HepG2 (cell line): ENCODE measurements at regions of chr21 and their contacts with region 1.

Region 1: DNA sequence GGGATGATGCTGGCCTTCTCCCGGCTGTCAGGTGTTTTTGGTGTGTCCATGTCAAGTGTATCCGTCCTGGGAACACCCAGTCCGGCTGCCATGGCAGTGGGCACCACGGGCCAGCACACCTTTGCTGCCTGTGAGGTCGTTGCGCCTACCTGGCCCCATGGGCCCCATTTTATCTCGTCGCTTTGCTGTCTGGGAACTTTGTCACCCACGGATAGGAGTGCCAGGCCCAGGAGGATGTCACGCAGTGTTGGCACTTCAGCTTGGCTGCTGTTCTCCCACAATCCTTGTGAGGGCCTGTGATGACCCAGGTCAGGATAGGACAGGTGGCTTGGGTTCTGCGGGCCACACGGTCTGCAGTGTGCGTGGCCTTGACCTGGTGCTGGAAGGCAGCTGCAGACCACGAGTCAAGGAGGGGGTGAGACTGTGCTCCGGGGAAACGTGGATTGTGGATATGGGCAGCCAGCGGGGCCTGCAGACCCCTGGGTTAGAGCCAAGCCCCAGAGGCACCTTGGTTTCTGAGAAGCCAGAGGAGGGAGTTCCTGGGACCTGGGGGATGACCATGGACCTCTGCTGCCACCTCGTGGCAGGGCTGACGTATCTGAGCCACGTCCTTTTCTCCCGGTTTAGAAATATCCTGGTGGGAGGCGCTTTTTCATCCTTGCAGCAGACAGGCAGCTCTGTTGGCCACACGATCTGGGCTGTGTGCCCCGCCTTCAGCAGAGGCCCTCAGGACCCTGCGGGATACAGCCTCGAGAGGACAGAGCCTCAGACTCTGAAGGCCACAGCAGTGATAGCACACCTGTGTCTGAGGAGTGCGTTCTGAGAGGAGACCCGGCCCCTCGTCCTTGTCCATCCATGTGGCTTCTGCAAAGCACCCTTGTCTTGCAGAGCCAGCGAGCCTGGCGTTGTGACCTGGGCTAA is 161.1 kb upstream of the COL6A1 start:
- DNase-seq: peak; percentile 78
- ATAC-seq: peak; percentile 85
- H3K4me3 ChIP-seq: no peak overlapping the region; a peak in 1 of 6 replicates
- H3K27ac ChIP-seq: no peak overlapping the region
- H3K4me1 ChIP-seq: peaks cover 35% of the 10 kb centered on the region
- H3K27me3 ChIP-seq: peaks cover 2 to 44% of the 10 kb centered on the region in 2 experiments; a peak in 3 of 5 replicates
- CTCF ChIP-seq: peak; percentile 96
- EP300 ChIP-seq: no peak
- POLR2A ChIP-seq: no peak
- RAD21 ChIP-seq: peak; percentile 95

Region 2: DNA sequence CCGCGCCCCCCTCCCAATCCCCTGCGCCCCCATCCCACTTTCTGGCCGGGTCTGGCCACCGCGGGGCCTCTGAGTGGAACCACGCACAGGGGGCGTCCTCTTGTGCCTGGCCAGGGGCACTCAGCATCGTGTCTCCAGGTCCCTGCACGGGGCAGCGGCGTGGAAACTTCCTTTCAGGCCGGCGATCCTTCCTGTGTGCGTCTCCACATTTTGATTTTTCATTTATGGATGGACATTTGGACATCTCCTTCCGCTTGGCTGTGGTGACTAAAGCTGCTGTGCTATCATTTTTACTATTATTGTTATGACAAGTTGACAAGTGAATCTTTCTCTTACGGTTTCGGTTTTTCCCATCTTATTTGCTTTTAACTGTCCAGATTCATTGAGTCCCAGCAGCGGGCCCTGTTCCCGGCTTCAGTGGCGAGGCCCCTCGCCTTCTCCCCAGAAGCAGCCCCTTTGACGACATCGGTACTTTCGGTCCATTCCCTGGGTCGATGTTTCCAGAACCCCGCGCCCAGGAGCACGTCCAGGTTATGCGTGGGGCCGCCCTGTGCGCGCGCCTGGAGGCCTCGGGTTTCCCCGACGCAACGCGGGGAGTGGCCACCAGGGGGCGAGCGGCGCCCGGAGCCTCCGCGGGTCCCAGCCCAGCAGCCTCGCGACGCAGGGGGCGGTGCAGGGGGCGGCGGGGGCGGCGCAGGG is 265.8 kb before region 1 on chr21:
- CTCF ChIA-PET with region 1: interaction called, 27 read pairs
- POLR2A ChIA-PET with region 1: interaction called, 8 read pairs
- in situ Hi-C with region 1: loop called (anchors 5 kb)
- intact Hi-C with region 1: loop called (anchors 1 kb)
- DNase-seq: peak; percentile 38
- ATAC-seq: peak; percentile 14
- H3K4me3 ChIP-seq: peak overlapping the region; percentile 61 to 71 (median 63)
- H3K27ac ChIP-seq: peak overlapping the region; percentile 8
- H3K4me1 ChIP-seq: peaks cover 33% of the 10 kb centered on the region
- H3K27me3 ChIP-seq: peaks cover 13 to 52% of the 10 kb centered on the region in 2 experiments
- CTCF ChIP-seq: peak; percentile 87
- EP300 ChIP-seq: no peak
- POLR2A ChIP-seq: no peak
- RAD21 ChIP-seq: peak; percentile 57

Region 3: DNA sequence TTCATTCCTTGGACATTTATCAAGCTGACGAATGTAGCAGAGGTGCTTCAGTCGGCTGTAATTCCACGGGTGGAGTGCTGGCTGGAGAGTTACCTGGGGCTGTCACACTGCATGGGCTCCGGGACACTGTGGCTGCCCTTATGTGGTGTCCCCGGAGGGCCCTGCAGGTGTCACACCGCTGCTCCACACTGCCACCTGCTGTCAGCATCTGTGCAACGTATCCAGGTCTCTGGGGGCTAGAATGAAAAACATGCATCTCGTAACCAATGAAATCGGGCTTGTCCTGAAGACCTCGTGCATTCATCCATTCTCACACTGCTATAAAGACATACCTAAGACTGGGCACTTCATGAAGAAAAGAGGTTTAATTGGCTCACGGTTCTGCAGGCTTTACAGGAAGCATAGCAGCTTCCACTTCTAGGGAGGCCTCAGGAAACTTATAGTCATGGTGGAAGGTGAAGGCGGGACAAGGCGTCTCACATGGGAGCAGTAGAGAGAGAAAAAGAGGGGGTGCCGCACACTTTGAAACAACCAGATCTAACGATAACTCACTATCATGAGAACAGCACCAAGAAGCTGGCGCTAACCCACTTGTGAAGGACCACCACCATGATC is 223.6 kb before region 1 on chr21:
- CTCF ChIA-PET with region 1: interaction called, 7 read pairs
- POLR2A ChIA-PET with region 1: no interaction called
- in situ Hi-C with region 1: no loop called
- intact Hi-C with region 1: loop called (anchors 1 kb)
- DNase-seq: peak; percentile 52
- ATAC-seq: peak; percentile 96
- H3K4me3 ChIP-seq: no peak overlapping the region
- H3K27ac ChIP-seq: no peak overlapping the region
- H3K4me1 ChIP-seq: no peaks in the 10 kb centered on the region
- H3K27me3 ChIP-seq: no peaks in the 10 kb centered on the region; a peak in 3 of 5 replicates
- CTCF ChIP-seq: peak; percentile 93
- EP300 ChIP-seq: no peak
- POLR2A ChIP-seq: no peak
- RAD21 ChIP-seq: peak; percentile 81

Region 4: GRCh38 chr21:45615145-45615711 is 205.2 kb before region 1 on chr21:
- CTCF ChIA-PET with region 1: no interaction called
- POLR2A ChIA-PET with region 1: no interaction called
- in situ Hi-C with region 1: no loop called
- intact Hi-C with region 1: loop called (anchors 1 kb)
- DNase-seq: peak; percentile 23
- ATAC-seq: peak; percentile 70
- H3K4me3 ChIP-seq: no peak overlapping the region; a peak in 1 of 6 replicates
- H3K27ac ChIP-seq: no peak overlapping the region
- H3K4me1 ChIP-seq: peaks cover 12% of the 10 kb centered on the region
- H3K27me3 ChIP-seq: peaks cover 15 to 80% of the 10 kb centered on the region in 2 experiments
- CTCF ChIP-seq: peak; percentile 49
- EP300 ChIP-seq: no peak
- POLR2A ChIP-seq: no peak
- RAD21 ChIP-seq: no peak

Region 5: DNA sequence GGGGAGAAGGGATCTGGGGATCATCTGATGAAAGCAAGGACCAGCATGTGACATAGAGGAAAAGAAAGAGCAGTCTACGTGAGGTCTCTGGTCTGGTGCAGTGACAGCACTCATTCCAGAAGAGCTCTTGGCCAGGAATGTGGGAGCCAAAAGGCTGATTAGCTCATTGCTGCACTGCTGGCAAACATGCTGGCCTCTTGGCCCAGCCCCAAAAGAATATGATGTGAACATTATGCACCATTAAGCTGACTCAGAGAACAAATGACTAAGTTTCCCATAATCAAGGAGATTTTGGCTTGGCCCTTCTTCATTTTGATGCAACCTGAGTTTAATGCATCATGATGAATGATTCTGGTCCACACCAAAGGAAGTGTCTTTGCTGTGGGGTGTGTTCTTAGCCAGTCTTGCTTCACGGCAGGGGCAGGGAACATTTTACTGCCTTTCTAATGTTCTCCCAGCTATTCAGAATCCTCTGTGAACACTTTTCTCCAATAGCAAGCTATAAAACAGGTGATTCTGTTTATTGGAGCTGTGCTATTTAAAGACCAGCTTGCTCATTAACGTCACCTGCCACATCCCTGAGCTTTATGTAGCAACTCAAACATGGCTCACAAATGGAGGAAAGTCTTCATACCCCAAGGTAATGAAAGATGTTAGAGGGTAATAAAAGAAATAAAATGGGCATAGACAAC is 121.8 kb before region 1 on chr21:
- CTCF ChIA-PET with region 1: interaction called, 16 read pairs
- POLR2A ChIA-PET with region 1: no interaction called
- in situ Hi-C with region 1: loop called (anchors 10 kb)
- intact Hi-C with region 1: loop called (anchors 2 kb)
- DNase-seq: no peak
- ATAC-seq: no peak
- H3K4me3 ChIP-seq: no peak overlapping the region
- H3K27ac ChIP-seq: no peak overlapping the region
- H3K4me1 ChIP-seq: no peaks in the 10 kb centered on the region
- H3K27me3 ChIP-seq: peaks cover 0 to 5% of the 10 kb centered on the region in 2 experiments; a peak in 2 of 5 replicates
- CTCF ChIP-seq: no peak
- EP300 ChIP-seq: no peak
- POLR2A ChIP-seq: no peak
- RAD21 ChIP-seq: no peak